ENCODE measurements at regions of chr11 and their contacts with region 1.

Region 1: DNA sequence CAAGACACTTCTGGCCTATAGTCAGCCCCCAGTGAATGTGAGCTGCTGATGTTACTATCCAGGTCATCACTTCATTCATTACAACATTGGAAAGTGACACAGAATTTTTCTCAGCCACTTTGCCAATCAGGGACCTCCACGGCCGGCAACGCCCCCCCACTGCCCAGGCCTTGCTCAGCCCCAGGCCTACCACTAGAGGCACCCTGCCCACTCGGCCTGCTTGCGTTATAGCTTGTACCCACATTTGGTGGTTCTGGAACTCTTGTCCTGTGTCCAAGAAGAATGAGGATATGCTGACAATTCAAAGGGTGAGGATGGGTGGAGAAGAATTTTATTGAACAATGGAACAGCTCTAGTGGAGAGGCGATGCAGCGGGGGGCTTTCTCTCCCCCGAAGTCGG is 96.2 kb downstream of the TSPAN18 start:
- DNase-seq: peak in 1 of 2 experiments; percentile 57
- H3K4me3 ChIP-seq: 0 out of 8 replicates have a peak overlapping the region, but pooled peaks of 1 of the 4 experiments have one; percentile 31
- H3K27ac ChIP-seq: no peak overlapping the region
- H3K4me1 ChIP-seq: peaks cover 11 to 32% (median 21%) of the 10 kb centered on the region in 4 experiments
- H3K27me3 ChIP-seq: peaks cover 0 to 25% (median 10%) of the 10 kb centered on the region in 4 experiments; a peak in 5 of 7 replicates
- CTCF ChIP-seq: peak; percentile 73 to 99 (median 93)
- EP300 ChIP-seq: no peak
- POLR2A ChIP-seq: no peak
- RAD21 ChIP-seq: peak; percentile 64 to 74

Region 2: DNA sequence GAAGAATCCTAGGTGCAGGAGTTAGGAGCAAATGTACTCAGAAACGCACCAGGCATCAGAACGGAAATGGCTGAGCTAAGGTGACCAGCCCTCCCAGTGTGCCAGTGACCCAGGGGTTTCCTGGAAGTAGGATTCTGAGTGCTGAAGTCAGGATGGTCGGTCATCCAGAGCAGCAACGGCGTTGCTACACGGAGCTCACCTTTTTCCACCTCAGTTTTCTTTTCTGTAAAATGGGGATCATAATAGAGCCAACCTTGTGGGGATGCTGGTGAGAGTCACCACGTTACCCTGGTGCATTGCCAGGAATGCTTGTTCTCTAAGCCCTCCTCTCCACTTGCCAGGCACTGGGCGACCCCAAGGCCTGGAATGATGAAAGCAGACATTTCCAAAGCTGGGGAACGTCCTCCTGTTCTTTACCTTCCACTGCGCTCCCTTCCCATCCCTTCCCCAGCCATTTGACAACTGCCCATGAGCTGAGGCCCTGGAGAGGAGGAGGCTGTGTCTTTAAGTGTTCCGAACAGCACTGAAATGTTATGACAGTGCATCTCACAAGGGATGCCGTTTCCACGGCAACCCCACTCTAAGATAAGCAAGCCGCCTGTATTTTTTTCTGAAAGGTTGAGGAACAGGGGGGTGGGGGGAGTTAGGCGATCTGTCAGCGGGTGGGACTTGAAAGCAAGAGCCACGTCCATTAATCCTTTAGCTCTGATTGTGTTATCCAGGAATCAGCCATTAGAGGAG is 29.5 kb before region 1 on chr11:
- CTCF ChIA-PET with region 1: interaction called, 17 read pairs
- POLR2A ChIA-PET with region 1: interaction called, 3 read pairs
- DNase-seq: no peak
- H3K4me3 ChIP-seq: no peak overlapping the region
- H3K27ac ChIP-seq: no peak overlapping the region
- H3K4me1 ChIP-seq: peaks cover 10 to 23% (median 17%) of the 10 kb centered on the region in 4 experiments
- H3K27me3 ChIP-seq: peaks cover 0 to 4% (median 0%) of the 10 kb centered on the region in 4 experiments; a peak in 1 of 7 replicates
- CTCF ChIP-seq: no peak
- EP300 ChIP-seq: no peak
- POLR2A ChIP-seq: no peak
- RAD21 ChIP-seq: no peak

Region 3: DNA sequence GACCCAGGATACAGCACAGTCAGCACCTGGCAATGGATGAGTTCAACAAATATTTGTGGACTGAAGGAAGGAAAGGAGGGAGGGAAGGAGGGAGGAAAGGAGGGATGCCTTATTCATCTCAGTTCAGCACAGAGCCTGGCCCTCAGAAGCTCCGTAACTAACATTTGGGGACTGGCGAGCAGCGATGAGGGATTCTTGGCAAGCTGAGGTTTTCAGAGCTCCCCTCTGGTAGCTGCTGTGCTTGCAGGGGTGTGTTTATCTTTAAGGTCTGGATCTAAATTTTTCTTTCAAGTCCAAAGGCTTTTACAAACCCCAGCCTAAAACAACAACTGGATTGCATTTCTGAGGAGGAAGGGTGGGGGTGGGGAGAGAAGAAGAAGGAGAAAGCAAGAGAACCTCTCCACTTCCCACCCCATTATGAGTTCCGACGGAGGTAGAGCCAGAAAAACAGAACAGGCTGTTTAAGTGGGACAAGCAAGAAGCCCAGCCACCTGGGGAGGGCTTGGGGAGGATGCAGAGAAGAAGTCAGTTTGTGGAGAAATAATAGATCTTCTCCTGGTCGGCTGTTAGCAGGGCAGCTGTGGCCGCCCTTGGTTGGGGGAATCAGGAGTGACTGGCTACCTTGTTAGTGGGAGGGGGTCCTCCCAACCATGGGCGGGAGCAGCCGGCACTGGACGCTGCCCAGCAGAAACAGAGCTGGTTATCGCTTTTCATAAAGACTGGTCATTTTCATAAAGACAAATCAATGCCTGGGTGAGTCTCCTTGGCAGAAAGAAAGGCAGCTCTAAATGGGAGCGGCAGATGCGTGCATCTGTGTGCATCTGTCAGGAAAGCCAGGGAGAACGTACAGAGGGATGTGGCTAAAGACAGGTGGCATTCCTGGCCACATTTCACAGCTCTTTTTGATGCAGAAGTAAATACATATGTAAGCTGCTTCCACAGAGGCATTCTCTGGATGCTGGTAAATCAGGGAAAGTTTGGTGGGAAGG is 18.3 kb before region 1 on chr11:
- CTCF ChIA-PET with region 1: interaction called, 17 read pairs
- POLR2A ChIA-PET with region 1: interaction called, 4 read pairs
- DNase-seq: no peak
- H3K4me3 ChIP-seq: no peak overlapping the region
- H3K27ac ChIP-seq: no peak overlapping the region
- H3K4me1 ChIP-seq: peaks cover 0 to 17% (median 11%) of the 10 kb centered on the region in 4 experiments; a peak in 5 of 7 replicates
- H3K27me3 ChIP-seq: 0 out of 7 replicates have a peak, but pooled peaks cover 0 to 2% (median 0%) of the 10 kb centered on the region in 4 experiments
- CTCF ChIP-seq: no peak
- EP300 ChIP-seq: no peak
- POLR2A ChIP-seq: no peak
- RAD21 ChIP-seq: no peak

Region 4: GRCh38 chr11:44833877-44834452 is 11.0 kb after region 1 on chr11:
- CTCF ChIA-PET with region 1: interaction called, 19 read pairs
- POLR2A ChIA-PET with region 1: interaction called, 8 read pairs
- DNase-seq: no peak
- H3K4me3 ChIP-seq: no peak overlapping the region; a peak in 1 of 8 replicates
- H3K27ac ChIP-seq: 0 out of 2 replicates have a peak overlapping the region, but pooled peaks have one; percentile 11
- H3K4me1 ChIP-seq: peaks cover 10 to 19% (median 14%) of the 10 kb centered on the region in 4 experiments; a peak in 6 of 7 replicates
- H3K27me3 ChIP-seq: peaks cover 0 to 16% (median 9%) of the 10 kb centered on the region in 4 experiments; a peak in 4 of 7 replicates
- CTCF ChIP-seq: no peak
- EP300 ChIP-seq: no peak
- POLR2A ChIP-seq: no peak
- RAD21 ChIP-seq: no peak

Region 5: GRCh38 chr11:44848203-44848962 is 25.4 kb after region 1 on chr11:
- CTCF ChIA-PET with region 1: interaction called, 22 read pairs
- POLR2A ChIA-PET with region 1: no interaction called
- DNase-seq: no peak
- H3K4me3 ChIP-seq: no peak overlapping the region
- H3K27ac ChIP-seq: no peak overlapping the region
- H3K4me1 ChIP-seq: peaks cover 3 to 16% (median 5%) of the 10 kb centered on the region in 4 experiments; a peak in 6 of 7 replicates
- H3K27me3 ChIP-seq: no peaks in the 10 kb centered on the region
- CTCF ChIP-seq: no peak
- EP300 ChIP-seq: no peak
- POLR2A ChIP-seq: no peak
- RAD21 ChIP-seq: no peak

Region 6: DNA sequence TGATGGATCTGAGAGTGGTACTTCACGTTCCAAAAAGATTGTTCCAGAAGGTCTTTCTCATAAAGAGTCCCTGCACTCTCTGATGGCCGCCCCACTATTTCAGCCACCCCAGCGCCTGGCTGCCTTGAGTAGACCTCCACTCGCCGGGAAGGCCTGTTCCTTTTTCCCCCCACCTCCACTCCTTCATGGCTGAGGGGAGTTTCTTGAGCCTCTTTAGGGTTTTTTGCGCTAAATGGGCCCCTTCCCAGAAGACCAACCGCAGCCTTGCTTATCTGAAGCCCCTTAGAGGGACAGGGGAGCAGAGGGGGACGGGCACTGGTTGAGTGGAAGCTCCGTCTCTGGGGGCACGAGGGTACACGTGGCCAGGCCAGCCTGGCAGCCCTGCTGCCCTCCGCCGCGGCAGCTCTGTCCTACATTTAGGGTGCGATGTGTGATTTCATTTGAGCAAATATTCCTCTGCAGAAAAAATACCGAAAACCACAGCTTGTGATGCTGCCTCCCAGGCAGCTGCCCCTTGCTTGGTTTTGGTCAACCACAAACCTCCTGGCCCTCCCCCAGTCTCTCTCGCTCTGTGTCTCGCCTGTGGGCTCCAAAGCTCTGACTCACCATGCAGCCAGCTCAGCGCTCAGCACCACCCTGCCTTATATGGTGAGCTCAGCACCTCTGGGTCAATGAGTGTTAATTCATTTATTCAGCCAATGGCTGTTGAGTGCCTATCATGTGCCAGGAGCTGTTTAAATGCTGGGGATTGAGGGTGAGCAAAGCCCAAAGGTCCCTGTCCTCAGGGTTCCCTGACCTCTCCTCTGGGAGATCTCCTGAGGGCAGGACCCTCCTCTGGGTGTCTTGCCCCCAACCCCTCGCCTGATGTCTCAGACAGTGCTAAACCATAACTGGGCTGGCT is 39.1 kb after region 1 on chr11:
- CTCF ChIA-PET with region 1: interaction called, 16 read pairs
- POLR2A ChIA-PET with region 1: interaction called, 7 read pairs
- DNase-seq: peak in 1 of 2 experiments; percentile 85
- H3K4me3 ChIP-seq: no peak overlapping the region; a peak in 2 of 8 replicates
- H3K27ac ChIP-seq: peak overlapping the region; percentile 59; the same call in 1 of the 2 replicates
- H3K4me1 ChIP-seq: peaks cover 33 to 55% (median 40%) of the 10 kb centered on the region in 4 experiments
- H3K27me3 ChIP-seq: no peaks in the 10 kb centered on the region
- CTCF ChIP-seq: no peak
- EP300 ChIP-seq: peak in 1 of 2 experiments; percentile 70; a peak in 1 of 3 replicates
- POLR2A ChIP-seq: peak in 1 of 2 experiments; percentile 37; a peak in 2 of 3 replicates
- RAD21 ChIP-seq: no peak

Region 7: GRCh38 chr11:44989831-44990566 is 167.0 kb after region 1 on chr11:
- CTCF ChIA-PET with region 1: no interaction called
- POLR2A ChIA-PET with region 1: no interaction called
- DNase-seq: no peak
- H3K4me3 ChIP-seq: no peak overlapping the region
- H3K27ac ChIP-seq: no peak overlapping the region
- H3K4me1 ChIP-seq: 0 out of 7 replicates have a peak, but pooled peaks cover 0 to 4% (median under 1%) of the 10 kb centered on the region in 4 experiments
- H3K27me3 ChIP-seq: no peaks in the 10 kb centered on the region
- CTCF ChIP-seq: no peak
- EP300 ChIP-seq: no peak
- POLR2A ChIP-seq: no peak
- RAD21 ChIP-seq: no peak